Endothelial cell of umbilical vein (primary cell): ENCODE measurements at regions of chr11 and their contacts with region 1.

Region 1: GRCh38 chr11:120303004-120303637 is 22.0 kb upstream of the TLCD5 start:
- DNase-seq: peak; percentile 73
- H3K4me3 ChIP-seq: no peak overlapping the region
- H3K27ac ChIP-seq: no peak overlapping the region
- H3K4me1 ChIP-seq: peaks cover 6% of the 10 kb centered on the region
- H3K27me3 ChIP-seq: peaks cover 0 to 6% of the 10 kb centered on the region in 2 experiments
- CTCF ChIP-seq: peak; percentile 96 to 99
- POLR2A ChIP-seq: no peak

Region 2: DNA sequence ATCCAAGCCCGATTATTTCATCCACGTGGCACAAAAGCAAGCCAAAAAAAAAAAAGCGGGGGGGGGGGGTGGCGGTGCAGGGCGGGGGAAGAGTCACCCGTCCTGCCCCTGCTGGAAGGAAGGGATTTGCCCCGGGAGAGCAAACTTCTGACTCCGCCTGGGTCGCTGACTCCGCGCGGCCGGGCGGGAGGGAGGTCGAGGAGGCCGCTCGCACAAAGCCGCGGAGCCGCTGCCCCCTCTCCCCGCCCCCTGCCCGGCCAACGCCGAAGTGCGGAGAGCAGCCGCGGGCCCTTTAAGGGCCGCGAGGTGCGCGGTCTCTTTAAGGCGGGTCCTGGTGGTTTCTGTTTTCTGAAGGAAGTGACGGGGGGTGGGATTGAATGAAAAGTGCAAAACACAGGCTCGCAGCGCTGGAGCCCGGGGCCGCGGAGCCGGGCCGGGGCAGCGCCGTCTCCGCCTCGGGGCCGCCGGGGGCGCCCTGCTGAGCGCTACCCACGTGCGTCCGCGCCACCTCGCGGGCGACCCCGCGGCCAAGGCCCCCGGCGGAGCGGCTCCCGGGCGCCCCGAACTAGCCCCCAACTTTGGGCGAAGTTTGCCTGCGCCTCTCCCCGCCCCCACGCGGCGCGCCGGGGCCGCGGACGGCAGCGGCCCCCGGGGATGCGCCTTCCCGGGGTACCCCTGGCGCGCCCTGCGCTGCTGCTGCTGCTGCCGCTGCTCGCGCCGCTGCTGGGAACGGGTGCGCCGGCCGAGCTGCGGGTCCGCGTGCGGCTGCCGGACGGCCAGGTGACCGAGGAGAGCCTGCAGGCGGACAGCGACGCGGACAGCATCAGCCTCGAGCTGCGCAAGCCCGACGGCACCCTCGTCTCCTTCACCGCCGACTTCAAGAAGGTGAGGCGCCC is 92.2 kb before region 1 on chr11 and contains the start of gene OAF:
- CTCF ChIA-PET with region 1: interaction called, 19 read pairs
- POLR2A ChIA-PET with region 1: no interaction called
- dilution Hi-C with region 1: no loop called
- intact Hi-C with region 1: no loop called
- DNase-seq: peak; percentile 84
- H3K4me3 ChIP-seq: peak within 1 kb of the TSS; percentile 37 to 67 (median 60)
- H3K27ac ChIP-seq: peak within 1 kb of the TSS; percentile 47
- H3K4me1 ChIP-seq: peaks cover 40% of the 10 kb centered on the region
- H3K27me3 ChIP-seq: no peaks in the 10 kb centered on the region
- CTCF ChIP-seq: peak in 1 of 2 donors; percentile 13
- POLR2A ChIP-seq: peak; percentile 86
- total RNA-seq, gene OAF: 26.7 and 32.1 TPM in 2 replicates

Region 3: DNA sequence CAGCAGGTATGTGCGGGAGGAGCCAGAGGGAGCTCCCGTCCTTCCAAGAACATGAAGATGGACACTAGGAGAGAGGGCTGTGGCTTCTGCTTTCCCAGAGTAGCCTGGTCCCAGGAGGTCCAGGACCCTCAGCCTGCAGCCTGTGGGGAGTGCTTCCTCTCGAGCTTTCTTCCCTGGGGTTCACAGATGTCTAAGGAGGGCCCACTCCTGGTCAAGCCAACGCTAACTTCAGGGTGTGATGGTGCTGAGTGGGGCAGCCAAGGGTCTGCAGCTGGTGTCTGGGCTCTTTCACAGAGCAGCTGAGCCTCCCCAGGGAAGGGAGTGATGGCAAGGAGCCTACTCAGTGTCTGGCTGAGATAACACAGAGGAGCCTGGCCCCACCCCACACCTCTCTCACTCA is 59.9 kb before region 1 on chr11:
- CTCF ChIA-PET with region 1: interaction called, 327 read pairs
- POLR2A ChIA-PET with region 1: no interaction called
- dilution Hi-C with region 1: no loop called
- intact Hi-C with region 1: no loop called
- DNase-seq: no peak
- H3K4me3 ChIP-seq: no peak overlapping the region
- H3K27ac ChIP-seq: no peak overlapping the region
- H3K4me1 ChIP-seq: no peaks in the 10 kb centered on the region
- H3K27me3 ChIP-seq: peaks cover 49 to 65% of the 10 kb centered on the region in 2 experiments
- CTCF ChIP-seq: no peak
- POLR2A ChIP-seq: no peak

Region 4: GRCh38 chr11:120268686-120269085 is 34.4 kb before region 1 on chr11:
- CTCF ChIA-PET with region 1: interaction called, 13 read pairs
- POLR2A ChIA-PET with region 1: no interaction called
- dilution Hi-C with region 1: no loop called
- intact Hi-C with region 1: no loop called
- DNase-seq: no peak
- H3K4me3 ChIP-seq: no peak overlapping the region
- H3K27ac ChIP-seq: no peak overlapping the region
- H3K4me1 ChIP-seq: no peaks in the 10 kb centered on the region
- H3K27me3 ChIP-seq: peaks cover 2 to 6% of the 10 kb centered on the region in 2 experiments
- CTCF ChIP-seq: no peak
- POLR2A ChIP-seq: no peak

Region 5: DNA sequence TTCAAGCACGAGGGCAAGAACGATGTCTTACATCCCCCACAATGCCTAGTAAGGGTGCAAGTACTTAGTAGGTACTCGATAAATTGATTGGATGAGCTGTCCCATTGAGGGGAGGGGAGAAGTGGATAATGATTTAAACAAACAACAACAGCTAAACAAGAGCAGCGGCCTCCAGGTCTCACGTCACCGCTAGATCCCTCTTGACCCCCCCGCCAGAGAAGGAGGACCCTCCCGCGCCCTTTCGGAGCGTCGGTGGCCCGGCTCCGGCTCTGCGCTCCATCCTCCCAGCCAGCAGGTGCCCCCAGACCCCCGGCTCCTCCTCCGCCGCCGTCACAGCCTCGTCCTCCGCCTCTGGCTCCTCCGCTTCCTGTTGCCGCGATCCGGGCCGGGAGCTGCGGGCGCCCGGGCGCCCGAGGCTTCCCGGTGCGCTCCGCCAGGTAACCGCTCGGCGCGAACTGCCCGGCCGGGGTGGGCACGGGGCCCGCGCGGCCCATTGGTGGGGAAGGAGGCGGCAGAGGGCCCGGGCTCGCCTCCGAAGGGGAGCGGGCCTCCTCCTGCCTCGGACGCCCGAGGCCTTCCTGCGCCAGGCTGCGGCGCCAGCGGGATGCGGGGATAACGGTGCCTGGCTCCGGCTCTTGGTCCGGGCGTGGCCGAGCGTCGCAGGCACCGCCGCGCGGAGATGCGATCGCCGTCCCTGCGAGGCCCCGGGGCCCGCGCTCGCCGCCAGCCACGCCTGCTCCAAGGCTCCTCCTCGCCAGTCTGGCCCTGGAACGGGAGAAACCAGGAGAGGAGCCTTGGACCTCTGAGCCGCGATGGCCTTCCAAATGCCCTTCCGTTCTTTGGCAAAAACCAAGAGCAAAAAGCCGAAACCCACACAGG is 22.1 kb after region 1 on chr11 and contains the start of gene TLCD5:
- CTCF ChIA-PET with region 1: interaction called, 15 read pairs
- POLR2A ChIA-PET with region 1: no interaction called
- dilution Hi-C with region 1: no loop called
- intact Hi-C with region 1: no loop called
- DNase-seq: peak; percentile 73
- H3K4me3 ChIP-seq: peak within 1 kb of the TSS; percentile 29 to 83 (median 77)
- H3K27ac ChIP-seq: peak within 1 kb of the TSS; percentile 73
- H3K4me1 ChIP-seq: peaks cover 19% of the 10 kb centered on the region
- H3K27me3 ChIP-seq: peaks cover 0 to 2% of the 10 kb centered on the region in 2 experiments
- CTCF ChIP-seq: peak; percentile 6 to 34
- POLR2A ChIP-seq: peak; percentile 81
- total RNA-seq, gene TLCD5: 6.1 and 6.3 TPM in 2 replicates

Region 6: DNA sequence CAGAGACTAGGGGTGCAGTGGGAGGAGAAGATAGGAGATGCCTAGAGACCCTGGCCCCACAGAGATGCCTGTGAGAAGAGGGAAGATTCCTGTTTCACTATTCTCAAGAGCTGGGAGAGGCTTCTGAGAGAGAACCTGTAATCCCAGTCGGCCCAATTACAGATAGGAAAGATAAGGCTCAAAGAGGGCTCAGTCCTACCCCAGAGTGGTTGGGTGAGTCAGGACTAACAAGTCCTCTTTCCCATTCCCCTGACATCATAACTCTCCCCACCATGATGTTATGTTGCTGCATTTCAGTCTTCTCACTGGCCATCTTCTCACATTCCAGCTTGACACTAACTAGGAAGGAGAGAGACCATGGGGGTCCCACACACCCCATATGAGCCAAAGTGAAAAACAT is 50.9 kb after region 1 on chr11:
- CTCF ChIA-PET with region 1: no interaction called
- POLR2A ChIA-PET with region 1: no interaction called
- dilution Hi-C with region 1: no loop called
- intact Hi-C with region 1: no loop called
- DNase-seq: no peak
- H3K4me3 ChIP-seq: no peak overlapping the region
- H3K27ac ChIP-seq: no peak overlapping the region
- H3K4me1 ChIP-seq: peaks cover 2% of the 10 kb centered on the region
- H3K27me3 ChIP-seq: no peaks in the 10 kb centered on the region
- CTCF ChIP-seq: no peak
- POLR2A ChIP-seq: no peak

Region 7: GRCh38 chr11:120400564-120401364 is 97.6 kb after region 1 on chr11:
- CTCF ChIA-PET with region 1: no interaction called
- POLR2A ChIA-PET with region 1: no interaction called
- dilution Hi-C with region 1: no loop called
- intact Hi-C with region 1: no loop called
- DNase-seq: peak; percentile 93
- H3K4me3 ChIP-seq: peak overlapping the region in 2 of 3 experiments; percentile 16 to 73
- H3K27ac ChIP-seq: peak overlapping the region; percentile 78
- H3K4me1 ChIP-seq: peaks cover 36% of the 10 kb centered on the region
- H3K27me3 ChIP-seq: no peaks in the 10 kb centered on the region
- CTCF ChIP-seq: no peak
- POLR2A ChIP-seq: no peak